Sigmoid colon (tissue), 7 donors: ENCODE measurements at regions of chr7 and their contacts with region 1.

Region 1: DNA sequence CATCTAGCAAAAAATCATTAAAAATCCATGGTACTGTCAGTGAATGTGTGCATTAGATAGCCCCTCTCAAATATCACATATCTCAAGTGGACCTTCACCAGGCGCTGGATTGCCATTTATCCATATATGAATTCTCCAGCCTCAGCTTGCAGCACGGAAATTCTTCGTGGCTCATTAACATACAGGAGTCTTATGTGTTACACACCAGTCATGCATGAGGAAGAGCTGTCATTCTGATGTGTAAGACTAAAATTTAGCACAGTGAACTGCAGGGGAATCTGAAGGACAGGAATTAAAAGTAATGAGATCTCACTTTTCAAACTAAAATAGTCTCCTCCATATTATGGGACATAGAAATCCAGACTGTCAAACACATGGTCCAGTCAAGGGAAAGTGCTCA is 542.4 kb upstream of the DPP6 start:
- DNase-seq: no peak
- H3K4me3 ChIP-seq: no peak overlapping the region
- H3K27ac ChIP-seq: peak overlapping the region in 3 of 4 donors; percentile 51 to 76 (median 73)
- H3K4me1 ChIP-seq: peaks cover 0 to 51% (median 18%) of the 10 kb centered on the region in 4 donors
- H3K27me3 ChIP-seq: no peaks in the 10 kb centered on the region
- CTCF ChIP-seq: no peak
- EP300 ChIP-seq: no peak
- POLR2A ChIP-seq: no peak

Region 2: DNA sequence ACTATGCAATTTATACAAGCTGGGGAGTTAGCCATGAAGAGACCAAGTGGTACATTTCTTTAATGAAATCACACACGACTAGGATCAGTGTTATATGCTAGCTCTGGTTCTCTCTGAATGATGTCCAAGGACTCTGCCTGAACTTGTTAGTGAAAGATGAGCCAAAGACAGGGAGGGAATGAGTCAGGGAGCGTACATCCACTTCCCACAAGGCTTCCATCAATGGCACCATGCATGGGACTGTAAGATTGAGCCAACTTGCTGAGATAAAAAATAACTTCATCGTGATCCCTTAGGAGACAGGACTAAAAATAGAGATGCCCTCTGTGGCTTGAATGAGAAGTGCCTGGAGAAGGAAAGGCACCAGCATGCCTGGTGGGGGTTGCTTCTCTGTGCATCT is 120.5 kb before region 1 on chr7:
- intact Hi-C with region 1: loop called (anchors 5 kb)
- DNase-seq: no peak
- H3K4me3 ChIP-seq: no peak overlapping the region
- H3K27ac ChIP-seq: peak overlapping the region; percentile 25 to 71 (median 35)
- H3K4me1 ChIP-seq: peaks cover 0 to 31% (median 19%) of the 10 kb centered on the region in 4 donors
- H3K27me3 ChIP-seq: no peaks in the 10 kb centered on the region
- CTCF ChIP-seq: no peak
- EP300 ChIP-seq: no peak
- POLR2A ChIP-seq: no peak

Region 3: GRCh38 chr7:153422291-153423209 is 87.2 kb before region 1 on chr7:
- intact Hi-C with region 1: no loop called
- DNase-seq: no peak
- H3K4me3 ChIP-seq: no peak overlapping the region
- H3K27ac ChIP-seq: peak overlapping the region in 3 of 4 donors; percentile 60 to 67 (median 62)
- H3K4me1 ChIP-seq: peaks cover 0 to 24% (median 19%) of the 10 kb centered on the region in 4 donors
- H3K27me3 ChIP-seq: no peaks in the 10 kb centered on the region
- CTCF ChIP-seq: no peak
- EP300 ChIP-seq: peak in 1 of 4 donors; percentile 33
- POLR2A ChIP-seq: no peak

Region 4: DNA sequence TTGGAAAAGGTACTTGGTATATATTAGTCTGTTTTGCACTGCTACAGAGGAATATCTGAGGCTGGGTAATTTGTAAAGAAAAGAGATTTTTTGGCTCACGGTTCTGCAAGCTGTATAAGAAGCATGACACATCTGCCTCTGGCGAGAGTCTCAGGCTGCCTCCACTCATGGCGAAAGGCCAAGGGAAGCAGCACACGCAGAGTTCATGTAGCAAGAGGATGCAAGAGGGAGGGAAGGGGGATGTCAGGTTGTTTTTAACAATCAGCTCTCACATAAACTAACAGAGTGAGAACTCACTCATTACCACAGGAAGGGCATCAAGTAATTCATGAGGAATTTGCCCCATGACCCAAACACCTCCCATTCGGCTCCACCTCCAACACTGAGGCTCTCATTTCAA is 57.7 kb after region 1 on chr7:
- intact Hi-C with region 1: no loop called
- DNase-seq: peak; percentile 94
- H3K4me3 ChIP-seq: no peak overlapping the region
- H3K27ac ChIP-seq: peak overlapping the region in 3 of 4 donors; percentile 51 to 61 (median 61)
- H3K4me1 ChIP-seq: peaks cover 0 to 45% (median 31%) of the 10 kb centered on the region in 4 donors
- H3K27me3 ChIP-seq: no peaks in the 10 kb centered on the region
- CTCF ChIP-seq: no peak
- EP300 ChIP-seq: no peak
- POLR2A ChIP-seq: no peak